Right ventricle myocardium superior (tissue), 1 donor: ENCODE measurements at regions of chr2 and their contacts with region 1.

Region 1: GRCh38 chr2:217934321-217935131 is 68.3 kb downstream of the TNS1 start:
- DNase-seq: peak; percentile 73
- ATAC-seq: peak; percentile 21

Region 2: DNA sequence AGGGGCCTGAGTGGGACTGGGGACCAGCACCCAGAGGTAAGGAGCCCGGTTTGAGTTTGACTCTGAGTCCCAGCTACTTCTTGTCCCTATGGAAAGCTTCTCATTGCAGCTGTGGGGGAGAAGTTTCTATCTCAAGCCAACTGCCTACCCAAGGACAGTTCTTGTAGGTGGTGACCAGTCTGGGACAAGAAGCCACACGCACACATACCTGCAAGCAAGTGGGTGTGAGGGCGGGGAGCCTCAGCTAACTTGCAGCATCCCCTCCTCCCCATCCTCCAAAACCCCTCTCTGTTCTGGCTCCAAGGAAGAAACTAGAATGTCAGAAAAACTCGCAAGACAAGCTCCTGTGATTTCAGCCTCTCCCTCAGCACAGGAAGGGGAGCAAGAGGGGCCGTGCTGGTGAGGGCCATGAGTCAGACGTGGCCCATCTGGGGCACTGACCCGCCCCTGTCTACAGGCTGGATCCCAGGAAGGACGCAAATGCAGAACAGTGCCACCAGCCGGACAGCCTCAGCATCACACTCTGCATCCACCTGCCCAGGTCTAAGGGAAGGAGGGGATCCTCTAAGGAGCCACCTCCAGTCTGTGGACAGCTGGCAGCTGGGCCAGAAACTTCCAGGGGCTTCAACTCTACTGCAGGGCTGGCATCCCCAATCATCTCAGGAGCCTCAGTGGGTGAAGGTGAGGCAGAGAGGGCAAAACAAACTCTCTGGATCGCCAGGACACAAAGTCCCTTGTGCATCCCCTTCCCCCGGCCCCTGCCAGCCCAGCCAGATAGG is 35.1 kb before region 1 on chr2:
- intact Hi-C with region 1: loop called (anchors 5 kb)
- DNase-seq: peak; percentile 77
- ATAC-seq: peak; percentile 15